ENCODE measurements at regions of chr15 and their contacts with region 1.

Region 1: DNA sequence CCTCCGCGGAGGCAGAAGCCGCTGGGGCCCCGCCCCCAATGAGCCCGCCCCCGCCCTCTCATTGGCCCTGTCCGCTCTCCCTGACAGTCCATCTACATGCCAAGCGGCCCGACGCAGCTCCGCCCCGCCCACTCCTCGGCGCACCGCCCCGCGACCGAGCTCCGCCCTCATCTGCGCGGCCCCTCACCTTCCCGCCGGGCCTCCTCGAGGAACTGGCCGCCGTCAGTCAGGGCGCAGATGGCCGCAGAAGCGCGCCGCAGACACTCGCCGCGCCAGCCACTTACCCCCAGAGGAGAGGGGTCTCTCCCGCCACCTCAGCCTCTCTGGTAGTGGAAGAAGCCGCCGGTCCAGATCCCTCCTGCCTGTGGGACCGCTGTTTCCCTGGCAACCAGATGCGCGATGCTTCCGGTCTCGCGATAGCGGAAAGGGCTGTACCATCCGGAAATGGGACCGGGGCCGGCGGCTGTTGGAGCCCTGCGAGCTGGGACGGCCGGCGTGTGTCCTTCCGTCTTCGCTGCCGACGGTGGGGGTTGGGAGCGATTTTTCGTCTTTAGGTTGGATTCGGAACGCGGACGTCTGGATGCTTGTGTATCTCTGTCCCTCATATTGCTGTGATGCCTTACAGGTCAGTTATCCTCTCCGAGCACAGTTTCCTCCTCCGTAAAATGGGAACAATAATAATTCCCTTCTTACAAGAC is at the start of gene FSIP1:
- DNase-seq: peak; percentile 89 to 97 (median 93)
- ATAC-seq: peak; percentile 98
- H3K4me3 ChIP-seq: peak within 1 kb of the TSS; percentile 83
- H3K4me3 Mint-ChIP-seq: peak within 1 kb of the TSS; percentile 86
- H3K27ac ChIP-seq: peak within 1 kb of the TSS; percentile 66 to 83
- H3K27ac Mint-ChIP-seq: peak within 1 kb of the TSS; percentile 76
- H3K4me1 ChIP-seq: peaks cover 9% of the 10 kb centered on the region
- H3K4me1 Mint-ChIP-seq: peaks cover 56% of the 10 kb centered on the region
- H3K27me3 ChIP-seq: no peaks in the 10 kb centered on the region
- H3K27me3 Mint-ChIP-seq: no peaks in the 10 kb centered on the region
- CTCF ChIP-seq: no peak
- total RNA-seq, gene FSIP1: 0.22 to 0.34 TPM

Region 2: DNA sequence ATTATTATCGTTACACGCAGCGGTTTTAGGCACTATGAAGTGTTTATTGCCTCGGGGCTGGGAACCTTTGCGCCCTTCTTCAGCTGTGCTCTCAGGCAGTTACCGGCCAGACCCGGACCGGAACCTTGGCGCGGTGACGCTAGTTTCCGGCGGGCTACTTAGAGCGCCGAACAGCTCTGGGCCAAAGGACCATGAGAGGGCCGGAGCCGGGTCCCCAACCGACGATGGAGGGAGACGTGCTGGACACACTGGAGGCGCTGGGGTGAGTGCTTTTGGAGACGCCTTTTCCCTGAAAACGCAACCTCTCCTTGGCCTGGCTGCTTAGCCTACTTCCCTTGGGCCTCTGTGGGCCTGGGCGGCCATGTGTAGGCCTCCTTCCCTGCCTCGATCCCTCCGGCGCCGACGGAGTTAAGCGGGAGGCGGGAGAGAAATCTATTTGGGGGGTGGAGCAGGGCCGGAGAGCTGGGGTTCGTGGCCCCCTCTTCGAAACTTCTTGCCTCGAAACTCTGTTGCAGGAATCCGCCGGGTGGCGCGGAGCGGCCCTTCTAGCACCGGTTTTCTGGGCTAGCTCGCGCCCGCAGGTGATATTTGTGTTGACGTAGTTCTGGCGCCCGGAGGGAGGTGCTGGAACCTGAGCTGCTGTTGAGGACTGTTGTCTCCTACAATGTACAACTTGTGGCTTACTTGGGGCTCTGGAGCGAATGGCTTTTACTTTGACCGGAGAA is 1328.5 kb before region 1 on chr15 and contains the start of gene FAM98B:
- CTCF ChIA-PET with region 1: interaction called, 3 read pairs
- POLR2A ChIA-PET with region 1: interaction called, 4 read pairs
- intact Hi-C with region 1: loop called in 1 of 2 experiments (anchors 5 kb)
- DNase-seq: peak; percentile 72 to 90 (median 84)
- ATAC-seq: peak; percentile 90
- H3K4me3 ChIP-seq: peak within 1 kb of the TSS; percentile 80
- H3K4me3 Mint-ChIP-seq: peak within 1 kb of the TSS; percentile 94
- H3K27ac ChIP-seq: peak within 1 kb of the TSS; percentile 75 to 77
- H3K27ac Mint-ChIP-seq: peak within 1 kb of the TSS; percentile 95
- H3K4me1 ChIP-seq: peaks cover 14% of the 10 kb centered on the region
- H3K4me1 Mint-ChIP-seq: peaks cover 40% of the 10 kb centered on the region
- H3K27me3 ChIP-seq: no peaks in the 10 kb centered on the region
- H3K27me3 Mint-ChIP-seq: no peaks in the 10 kb centered on the region
- CTCF ChIP-seq: no peak
- total RNA-seq, gene FAM98B: 20.1 to 20.4 TPM

Region 3: GRCh38 chr15:39828374-39828931 is 45.9 kb after region 1 on chr15:
- CTCF ChIA-PET with region 1: no interaction called
- POLR2A ChIA-PET with region 1: no interaction called
- intact Hi-C with region 1: no loop called
- DNase-seq: no peak
- ATAC-seq: no peak
- H3K4me3 ChIP-seq: no peak overlapping the region
- H3K4me3 Mint-ChIP-seq: no peak overlapping the region
- H3K27ac ChIP-seq: no peak overlapping the region
- H3K27ac Mint-ChIP-seq: no peak overlapping the region
- H3K4me1 ChIP-seq: no peaks in the 10 kb centered on the region
- H3K4me1 Mint-ChIP-seq: no peaks in the 10 kb centered on the region
- H3K27me3 ChIP-seq: peaks cover 12 to 32% of the 10 kb centered on the region in 2 experiments
- H3K27me3 Mint-ChIP-seq: peaks cover 43% of the 10 kb centered on the region
- CTCF ChIP-seq: no peak

Region 4: DNA sequence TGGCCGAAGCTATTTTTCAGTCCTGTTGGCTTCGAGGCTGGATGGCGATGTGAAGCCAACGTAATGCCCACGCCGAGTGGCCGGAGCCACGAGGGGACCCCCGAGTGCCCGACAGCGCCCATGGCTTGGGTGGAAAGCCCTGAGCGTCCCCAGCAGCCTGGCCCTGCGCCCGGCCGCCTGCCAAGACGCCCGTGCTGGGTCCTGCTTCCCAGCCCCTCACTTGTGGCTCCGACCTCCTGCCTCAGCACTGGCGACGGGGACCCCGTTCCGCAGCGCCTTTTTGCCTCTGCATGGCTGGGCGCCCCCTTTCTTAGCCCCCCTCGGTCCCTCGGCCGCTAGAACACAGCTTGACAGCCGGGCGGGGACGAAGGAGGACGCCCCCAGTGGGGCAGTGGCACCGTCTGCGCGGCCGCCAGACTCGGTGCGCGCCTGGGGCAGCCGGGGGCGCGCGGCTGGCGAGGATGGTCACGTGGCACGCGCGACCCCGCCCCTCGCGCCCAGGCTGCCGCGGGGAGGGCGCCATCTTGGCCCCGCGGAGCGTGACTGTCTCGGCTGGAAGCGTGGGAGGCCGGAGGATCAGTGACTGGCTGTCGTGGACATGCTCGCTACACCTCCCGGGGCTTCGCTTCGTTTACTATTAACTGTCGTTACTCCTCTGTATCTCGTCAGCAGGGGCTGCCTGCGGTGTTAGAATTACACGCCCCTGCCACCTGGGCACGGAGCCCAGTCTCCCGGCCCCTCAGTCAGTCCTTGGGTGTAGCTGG is 138.1 kb after region 1 on chr15:
- CTCF ChIA-PET with region 1: interaction called, 6 read pairs
- POLR2A ChIA-PET with region 1: no interaction called
- intact Hi-C with region 1: loop called in 1 of 2 experiments (anchors 5 kb)
- DNase-seq: peak; percentile 44 to 89 (median 70)
- ATAC-seq: peak; percentile 94
- H3K4me3 ChIP-seq: peak overlapping the region; percentile 62
- H3K4me3 Mint-ChIP-seq: peak overlapping the region; percentile 88
- H3K27ac ChIP-seq: no peak overlapping the region
- H3K27ac Mint-ChIP-seq: peak overlapping the region; percentile 66
- H3K4me1 ChIP-seq: peaks cover 21% of the 10 kb centered on the region
- H3K4me1 Mint-ChIP-seq: peaks cover 15% of the 10 kb centered on the region
- H3K27me3 ChIP-seq: peaks cover 13 to 45% of the 10 kb centered on the region in 2 experiments
- H3K27me3 Mint-ChIP-seq: peaks cover 28% of the 10 kb centered on the region
- CTCF ChIP-seq: no peak

Region 5: DNA sequence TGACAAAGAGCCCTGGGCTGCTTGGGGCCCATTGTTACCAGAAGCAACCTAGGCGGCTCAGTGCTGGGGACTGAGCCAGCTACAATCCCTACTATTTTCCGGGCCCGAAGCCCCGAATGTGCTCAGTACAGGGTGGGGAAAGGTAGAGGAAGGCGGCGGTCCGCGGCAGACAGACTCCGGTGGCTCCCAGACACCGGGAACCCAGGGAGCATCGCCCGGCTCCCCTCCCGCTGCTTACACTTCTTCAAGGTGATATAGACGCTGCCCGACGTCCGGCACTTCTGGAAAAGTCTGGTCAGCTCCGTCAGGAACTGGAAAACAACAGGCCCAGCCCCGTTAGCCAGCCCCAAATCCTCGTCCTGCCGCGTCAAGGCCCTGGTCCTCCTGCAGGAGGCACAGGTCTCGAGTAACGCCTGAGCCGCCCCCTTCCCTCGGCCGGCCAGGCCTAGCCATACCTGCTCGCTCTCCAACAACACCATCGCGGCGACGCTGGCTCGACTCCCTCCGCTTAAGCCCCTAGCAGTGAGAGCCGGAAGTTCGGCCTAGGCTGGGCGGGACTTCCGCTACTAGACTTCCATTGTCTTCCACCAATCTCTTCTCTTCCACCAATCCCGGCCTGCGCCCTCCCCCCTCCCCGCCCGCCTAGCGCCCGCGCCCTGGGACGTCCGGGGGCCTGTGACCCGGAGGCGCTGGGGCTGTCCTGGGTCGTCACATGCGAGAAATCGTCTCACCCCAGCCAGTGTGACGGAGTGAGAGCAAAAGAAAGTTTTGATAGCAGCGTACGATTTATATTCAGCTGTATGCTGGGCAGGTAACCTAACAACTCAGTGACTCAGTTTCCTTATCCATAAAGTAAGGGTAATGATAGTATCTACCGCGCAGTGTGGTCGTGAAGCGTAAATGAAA is 256.3 kb after region 1 on chr15 and contains the start of gene SRP14:
- CTCF ChIA-PET with region 1: no interaction called
- POLR2A ChIA-PET with region 1: interaction called, 6 read pairs
- intact Hi-C with region 1: loop called (anchors 2 to 10 kb)
- DNase-seq: peak; percentile 85 to 96 (median 90)
- ATAC-seq: peak; percentile 92
- H3K4me3 ChIP-seq: peak within 1 kb of the TSS; percentile 95
- H3K4me3 Mint-ChIP-seq: peak within 1 kb of the TSS; percentile 100
- H3K27ac ChIP-seq: peak within 1 kb of the TSS; percentile 88 to 90
- H3K27ac Mint-ChIP-seq: peak within 1 kb of the TSS; percentile 97
- H3K4me1 ChIP-seq: peaks cover 20% of the 10 kb centered on the region
- H3K4me1 Mint-ChIP-seq: peaks cover 49% of the 10 kb centered on the region
- H3K27me3 ChIP-seq: no peaks in the 10 kb centered on the region
- H3K27me3 Mint-ChIP-seq: no peaks in the 10 kb centered on the region
- CTCF ChIP-seq: no peak
- total RNA-seq, gene SRP14: 120 to 126 TPM

Region 6: DNA sequence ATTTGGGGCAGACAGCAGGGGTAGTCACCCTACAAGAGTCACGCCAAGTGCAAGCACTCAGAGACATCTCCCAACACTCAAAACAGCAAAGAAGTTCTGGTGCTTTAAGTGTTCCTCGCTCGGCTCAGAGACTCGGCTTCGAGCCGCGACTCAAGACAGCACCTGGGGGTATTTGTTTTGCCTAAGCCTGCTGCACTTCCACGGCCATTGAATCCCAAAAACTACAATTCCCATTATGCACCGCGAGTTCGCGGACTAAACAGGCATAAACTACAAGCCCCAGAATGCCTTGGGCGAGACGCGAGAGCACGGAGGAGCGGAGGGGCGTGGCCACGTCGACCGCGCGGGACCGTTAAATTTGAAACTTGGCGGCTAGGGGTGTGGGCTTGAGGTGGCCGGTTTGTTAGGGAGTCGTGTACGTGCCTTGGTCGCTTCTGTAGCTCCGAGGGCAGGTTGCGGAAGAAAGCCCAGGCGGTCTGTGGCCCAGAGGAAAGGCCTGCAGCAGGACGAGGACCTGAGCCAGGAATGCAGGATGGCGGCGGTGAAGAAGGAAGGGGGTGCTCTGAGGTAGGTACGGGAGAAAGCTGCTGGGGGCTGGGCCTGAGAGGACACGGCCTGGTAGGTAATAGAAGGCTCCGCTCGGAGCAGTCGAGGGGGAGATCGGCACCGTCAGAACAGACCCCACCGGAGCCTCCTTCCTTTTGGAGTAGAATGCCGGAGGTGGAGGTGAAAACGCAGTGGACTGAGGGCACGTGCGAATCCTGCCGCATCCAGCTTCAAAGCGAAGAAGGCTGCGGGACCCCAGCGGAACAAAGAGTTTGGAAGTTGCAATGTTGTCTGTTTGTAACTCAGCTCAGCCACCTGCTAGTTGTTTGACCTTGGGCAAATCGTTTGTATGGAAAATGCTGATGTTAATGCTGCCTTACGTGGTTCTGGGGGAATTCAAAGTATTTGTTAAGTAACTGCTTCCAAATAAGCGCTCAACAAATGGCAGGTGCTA is 378.4 kb after region 1 on chr15 and contains the start of gene BUB1B:
- CTCF ChIA-PET with region 1: no interaction called
- POLR2A ChIA-PET with region 1: interaction called, 4 read pairs
- intact Hi-C with region 1: loop called in 1 of 2 experiments (anchors 5 kb)
- DNase-seq: peak; percentile 84 to 96 (median 90)
- ATAC-seq: peak; percentile 99
- H3K4me3 ChIP-seq: peak within 1 kb of the TSS; percentile 78
- H3K4me3 Mint-ChIP-seq: no peak within 1 kb of the TSS
- H3K27ac ChIP-seq: no peak within 1 kb of the TSS
- H3K27ac Mint-ChIP-seq: no peak within 1 kb of the TSS
- H3K4me1 ChIP-seq: peaks cover 12% of the 10 kb centered on the region
- H3K4me1 Mint-ChIP-seq: no peaks in the 10 kb centered on the region
- H3K27me3 ChIP-seq: no peaks in the 10 kb centered on the region
- H3K27me3 Mint-ChIP-seq: no peaks in the 10 kb centered on the region
- CTCF ChIP-seq: no peak
- total RNA-seq, gene BUB1B: 1.4 to 2.4 TPM

Region 7: DNA sequence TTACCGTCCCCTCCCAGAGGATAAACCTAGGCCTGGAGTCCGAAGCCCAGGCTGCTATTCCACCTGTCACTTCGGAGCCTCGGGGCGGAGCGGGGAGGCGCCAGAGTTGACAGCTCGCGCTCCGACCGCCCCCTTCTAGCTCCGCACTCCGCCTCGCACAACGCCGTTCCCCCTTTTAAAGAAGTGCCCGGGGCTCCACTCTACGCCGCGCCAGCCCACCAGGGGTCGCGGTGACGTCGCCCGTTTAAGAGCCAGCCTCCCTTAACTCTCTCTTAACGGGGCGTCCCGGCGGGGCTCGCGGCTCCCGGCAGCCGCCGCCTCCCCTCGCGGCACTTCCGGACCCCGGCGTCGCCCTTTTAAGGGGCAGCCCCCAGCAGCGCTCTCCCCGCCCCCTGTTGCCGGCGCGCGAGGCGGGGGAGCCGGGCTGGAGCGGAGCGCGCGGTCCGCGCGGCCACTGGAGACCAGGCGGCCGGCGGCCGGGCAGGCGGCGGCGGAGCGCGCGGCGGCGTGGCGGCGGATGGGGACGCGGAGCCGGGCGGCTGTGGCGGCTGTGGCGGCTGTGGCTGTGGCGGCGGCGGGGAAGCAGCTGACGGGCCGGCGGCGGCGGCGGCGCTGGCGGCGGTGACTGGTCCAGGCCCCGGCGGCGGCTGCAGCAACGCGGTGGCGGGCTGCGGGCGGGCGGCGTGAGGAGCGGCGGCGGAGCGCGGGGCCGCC is 540.8 kb after region 1 on chr15 and contains the start of gene INAFM2:
- CTCF ChIA-PET with region 1: no interaction called
- POLR2A ChIA-PET with region 1: no interaction called
- intact Hi-C with region 1: loop called in 1 of 2 experiments (anchors 10 kb)
- DNase-seq: peak; percentile 75 to 96 (median 87)
- ATAC-seq: peak; percentile 84
- H3K4me3 ChIP-seq: peak within 1 kb of the TSS; percentile 55
- H3K4me3 Mint-ChIP-seq: peak within 1 kb of the TSS; percentile 92
- H3K27ac ChIP-seq: peak within 1 kb of the TSS; percentile 10 to 41
- H3K27ac Mint-ChIP-seq: peak within 1 kb of the TSS; percentile 79
- H3K4me1 ChIP-seq: peaks cover 32% of the 10 kb centered on the region
- H3K4me1 Mint-ChIP-seq: peaks cover 36% of the 10 kb centered on the region
- H3K27me3 ChIP-seq: no peaks in the 10 kb centered on the region
- H3K27me3 Mint-ChIP-seq: no peaks in the 10 kb centered on the region
- CTCF ChIP-seq: peak; percentile 59
- total RNA-seq, gene INAFM2: 6.8 to 7.0 TPM

Region 8: DNA sequence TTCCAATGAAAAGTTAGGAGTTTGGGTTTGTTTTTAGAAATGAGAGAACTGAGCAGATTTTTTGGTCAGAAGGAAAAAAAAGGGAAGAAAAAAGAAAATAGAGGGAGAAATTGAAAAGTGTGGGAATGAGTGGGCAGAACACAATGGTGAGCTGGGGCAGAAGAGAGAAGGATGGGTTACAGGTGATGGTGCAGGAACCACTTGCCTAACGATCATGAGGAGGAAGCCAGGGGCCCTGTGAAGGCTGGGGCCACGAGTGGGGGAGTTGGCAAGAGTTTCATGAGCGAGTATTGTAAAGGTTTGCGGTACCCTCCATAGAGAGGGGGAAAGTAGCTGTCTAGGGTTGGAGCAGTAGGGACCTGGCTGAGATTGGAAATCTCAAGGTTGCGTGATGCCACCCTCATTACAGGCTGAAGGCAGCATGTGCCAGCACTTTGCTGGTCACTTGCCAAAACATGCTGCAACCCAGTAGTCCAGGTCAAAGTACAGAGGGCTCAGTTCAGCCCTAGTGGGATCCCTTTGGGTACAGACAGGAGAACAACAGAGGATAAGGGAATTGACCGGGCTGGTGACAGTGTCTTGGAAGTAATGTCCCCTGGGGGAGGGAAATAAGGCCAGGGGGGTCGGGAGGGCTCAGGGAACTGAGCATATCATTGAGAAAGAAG is 629.6 kb after region 1 on chr15:
- CTCF ChIA-PET with region 1: no interaction called
- POLR2A ChIA-PET with region 1: no interaction called
- intact Hi-C with region 1: loop called in 1 of 2 experiments (anchors 10 kb)
- DNase-seq: no peak
- ATAC-seq: no peak
- H3K4me3 ChIP-seq: no peak overlapping the region
- H3K4me3 Mint-ChIP-seq: no peak overlapping the region
- H3K27ac ChIP-seq: no peak overlapping the region
- H3K27ac Mint-ChIP-seq: no peak overlapping the region
- H3K4me1 ChIP-seq: no peaks in the 10 kb centered on the region
- H3K4me1 Mint-ChIP-seq: peaks cover 14% of the 10 kb centered on the region
- H3K27me3 ChIP-seq: no peaks in the 10 kb centered on the region
- H3K27me3 Mint-ChIP-seq: no peaks in the 10 kb centered on the region
- CTCF ChIP-seq: no peak